T-cell (primary cell): ENCODE measurements at regions of chr4 and their contacts with region 1.

Region 1: DNA sequence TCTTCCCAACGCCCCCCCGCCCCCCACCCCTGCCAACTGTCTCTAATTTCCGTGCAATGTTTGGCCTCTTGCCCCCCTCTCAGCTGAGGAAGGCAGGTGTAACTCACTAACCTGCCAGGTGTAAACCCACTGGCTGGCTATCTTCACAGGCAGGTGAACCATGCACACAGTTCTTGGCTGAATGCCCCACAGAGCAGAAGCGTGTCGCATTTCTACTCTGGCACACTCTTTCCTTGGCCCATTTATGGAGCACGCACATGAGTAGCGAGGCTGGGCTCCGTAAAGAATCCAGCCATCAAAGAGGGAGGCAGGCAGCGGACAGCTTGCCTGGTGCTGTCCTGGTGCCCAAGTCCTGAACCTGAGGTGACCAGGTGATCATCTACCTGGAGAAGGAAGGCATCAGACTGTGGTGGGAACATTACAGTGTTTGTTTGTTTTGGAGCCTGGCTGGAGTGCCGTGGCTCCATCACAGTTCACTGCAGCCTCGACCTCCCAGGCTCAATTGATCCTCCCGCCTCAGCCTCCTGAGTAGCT is 39.2 kb upstream of the CRMP1 start:
- DNase-seq: no peak
- ATAC-seq: no peak
- H3K4me3 ChIP-seq: no peak overlapping the region
- H3K4me3 Mint-ChIP-seq: no peak overlapping the region
- H3K27ac ChIP-seq: no peak overlapping the region
- H3K27ac Mint-ChIP-seq: no peak overlapping the region
- H3K4me1 ChIP-seq: no peaks in the 10 kb centered on the region
- H3K4me1 Mint-ChIP-seq: no peaks in the 10 kb centered on the region
- H3K27me3 ChIP-seq: peaks cover 0 to 21% of the 10 kb centered on the region in 2 experiments
- H3K27me3 Mint-ChIP-seq: peaks cover 8 to 17% of the 10 kb centered on the region in 2 donors

Region 2: DNA sequence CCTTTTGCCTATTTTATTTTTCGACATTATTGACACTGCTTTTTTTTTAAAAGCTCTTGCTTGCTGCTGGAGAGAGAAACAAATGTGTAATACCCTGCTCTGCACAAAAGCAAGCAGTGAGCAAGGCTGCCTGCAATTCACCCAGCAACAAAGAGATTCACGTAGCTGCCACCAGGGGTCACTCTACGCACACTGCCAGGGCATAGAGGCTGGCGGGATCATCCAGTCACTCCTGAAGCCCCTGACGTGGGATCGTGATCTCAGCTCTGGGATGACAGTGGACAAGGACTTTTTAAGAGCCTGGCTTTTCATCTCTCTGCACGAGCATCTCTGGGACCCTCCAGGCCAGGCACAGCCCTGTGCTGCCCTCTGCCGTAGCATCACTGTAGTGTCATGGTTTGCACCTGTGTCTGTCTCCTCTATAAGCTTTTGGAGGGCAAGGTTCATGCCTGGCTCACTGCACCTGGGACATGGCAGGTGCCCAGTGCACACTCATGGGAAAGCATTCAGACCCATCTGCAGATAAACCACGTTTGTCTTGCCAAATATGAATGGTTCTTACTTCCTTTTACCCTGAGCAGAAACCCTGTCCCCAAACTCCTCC is 66.3 kb after region 1 on chr4:
- CTCF ChIA-PET with region 1: no interaction called
- POLR2A ChIA-PET with region 1: no interaction called
- DNase-seq: peak in 24 of 35 experiments; percentile 4 to 68 (median 22)
- ATAC-seq: peak in 3 of 4 experiments; percentile 40 to 50 (median 40)
- H3K4me3 ChIP-seq: no peak overlapping the region
- H3K4me3 Mint-ChIP-seq: no peak overlapping the region
- H3K27ac ChIP-seq: no peak overlapping the region
- H3K27ac Mint-ChIP-seq: no peak overlapping the region
- H3K4me1 ChIP-seq: peaks cover 0 to 3% of the 10 kb centered on the region in 2 experiments
- H3K4me1 Mint-ChIP-seq: peaks cover 0 to 4% (median 0%) of the 10 kb centered on the region in 3 donors
- H3K27me3 ChIP-seq: peaks cover 0 to 21% of the 10 kb centered on the region in 2 experiments
- H3K27me3 Mint-ChIP-seq: peaks cover 6 to 14% of the 10 kb centered on the region in 2 donors

Region 3: GRCh38 chr4:7411896-7412553 is 1479.9 kb after region 1 on chr4:
- CTCF ChIA-PET with region 1: no interaction called
- POLR2A ChIA-PET with region 1: interaction called in 1 of 2 experiments, 13 read pairs
- DNase-seq: peak in 2 of 35 experiments; percentile 5 to 8
- ATAC-seq: no peak
- H3K4me3 ChIP-seq: no peak overlapping the region
- H3K4me3 Mint-ChIP-seq: no peak overlapping the region
- H3K27ac ChIP-seq: no peak overlapping the region
- H3K27ac Mint-ChIP-seq: no peak overlapping the region
- H3K4me1 ChIP-seq: no peaks in the 10 kb centered on the region
- H3K4me1 Mint-ChIP-seq: no peaks in the 10 kb centered on the region
- H3K27me3 ChIP-seq: peaks cover 0 to 25% of the 10 kb centered on the region in 2 experiments
- H3K27me3 Mint-ChIP-seq: peaks cover 29 to 35% of the 10 kb centered on the region in 2 donors